GM10248 (cell line): ENCODE measurements at regions of chr11 and their contacts with region 1.

Region 1: DNA sequence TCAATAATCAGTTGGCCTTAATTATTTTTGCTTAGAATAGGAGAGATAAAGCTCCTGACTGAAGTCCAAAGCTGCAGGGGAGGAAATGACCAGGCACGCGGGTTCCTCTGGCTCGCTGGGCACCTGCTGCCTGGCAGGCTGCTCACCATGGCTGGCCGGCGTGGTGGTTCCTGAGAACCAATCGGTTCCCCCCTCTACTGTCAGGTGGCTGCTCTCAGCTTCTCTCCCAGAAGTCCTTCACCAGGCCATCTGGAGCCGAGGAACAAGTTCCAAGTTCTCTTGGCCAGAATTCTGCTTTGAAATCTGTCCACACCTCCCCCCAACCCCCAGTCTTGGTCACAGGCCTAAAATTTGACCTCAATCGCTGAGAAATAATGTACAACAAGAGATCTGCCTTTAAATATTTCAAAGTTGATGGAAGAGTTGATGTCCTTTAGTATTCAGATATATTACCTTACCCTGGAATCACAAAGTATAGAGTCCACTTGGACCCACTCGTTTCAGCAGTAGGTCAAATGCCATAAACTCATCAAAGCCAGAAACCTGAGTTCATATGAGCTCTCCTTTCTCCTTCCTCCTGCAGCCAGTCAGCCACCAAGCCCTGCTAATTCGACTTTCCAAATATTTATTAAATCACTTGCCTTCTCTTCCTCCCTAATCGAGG is 25.2 kb downstream of the EXPH5 start:
- DNase-seq: no peak
- CTCF ChIP-seq: no peak

Region 2: GRCh38 chr11:108551651-108552462 is 16.5 kb before region 1 on chr11:
- CTCF ChIA-PET with region 1: interaction called, 28 read pairs
- POLR2A ChIA-PET with region 1: no interaction called
- DNase-seq: no peak
- CTCF ChIP-seq: no peak

Region 3: DNA sequence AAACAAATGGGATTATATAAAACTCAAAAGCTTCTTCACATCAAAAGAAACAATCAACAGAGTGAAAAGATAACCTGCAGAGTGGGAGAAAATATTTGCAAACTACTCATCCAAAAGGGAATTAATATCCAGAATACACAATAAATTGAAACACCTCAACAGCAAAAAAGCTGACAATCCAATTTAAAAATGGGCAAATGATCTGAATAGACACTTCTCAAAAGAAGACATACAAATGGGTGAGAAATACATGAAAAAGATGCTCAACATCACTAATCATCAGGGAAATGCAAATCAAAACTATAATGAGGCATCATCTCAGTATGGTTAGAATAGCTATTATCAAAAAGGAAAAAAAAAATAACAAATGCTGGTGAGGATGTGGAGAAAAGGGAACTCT is 11.7 kb after region 1 on chr11:
- CTCF ChIA-PET with region 1: interaction called, 16 read pairs
- POLR2A ChIA-PET with region 1: no interaction called
- DNase-seq: no peak
- CTCF ChIP-seq: no peak

Region 4: GRCh38 chr11:108609681-108610080 is 41.4 kb after region 1 on chr11:
- CTCF ChIA-PET with region 1: no interaction called
- POLR2A ChIA-PET with region 1: no interaction called
- DNase-seq: no peak
- CTCF ChIP-seq: no peak

Region 5: GRCh38 chr11:108672113-108672512 is 103.8 kb after region 1 on chr11:
- CTCF ChIA-PET with region 1: no interaction called
- POLR2A ChIA-PET with region 1: no interaction called
- DNase-seq: no peak
- CTCF ChIP-seq: no peak